Activated CD4-positive, alpha-beta T cell treated with anti-CD3 and anti-CD28 coated beads, Interleukin-2, amount 10 ng/mL, durations not matched to agents 7 days and 5 days (primary cell): ENCODE measurements at regions of chr10 and their contacts with region 1.

Region 1: DNA sequence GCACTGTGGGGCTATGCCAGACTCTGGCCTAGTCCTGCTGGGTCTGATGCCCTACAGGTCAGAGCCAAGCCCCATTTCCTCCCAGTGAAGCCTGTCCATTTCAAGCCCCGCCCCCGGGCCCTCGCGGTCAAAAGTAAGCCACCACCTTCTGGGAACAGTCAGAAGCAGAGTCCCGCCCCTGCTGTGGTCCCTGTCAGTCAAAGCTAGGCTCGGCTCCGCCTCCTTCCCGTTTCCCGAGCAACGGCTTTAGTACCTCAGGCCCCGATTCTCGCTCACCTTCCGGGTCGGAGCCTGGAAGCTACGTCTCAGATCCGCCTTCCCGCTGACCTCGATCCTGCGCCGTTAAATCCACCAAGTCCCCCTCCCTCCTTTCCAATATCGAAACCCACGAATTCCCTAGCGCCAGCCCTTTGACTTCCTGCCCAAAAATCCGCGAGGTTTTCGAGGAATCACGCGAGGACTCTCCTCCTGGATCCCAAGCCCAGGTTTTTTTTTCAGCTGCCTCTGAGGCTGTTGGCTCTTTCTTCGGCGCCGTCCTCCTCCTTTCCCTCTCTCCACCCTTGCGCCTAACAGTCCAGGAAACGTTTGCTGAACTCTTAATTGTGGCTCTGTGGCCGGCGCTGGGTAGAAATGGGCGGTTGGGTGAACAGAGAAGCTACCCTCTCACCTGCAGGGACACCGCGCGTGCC is 11.8 kb downstream of the SFXN3 start:
- DNase-seq: peak; percentile 89
- H3K4me3 Mint-ChIP-seq: peak overlapping the region; percentile 89
- H3K27ac Mint-ChIP-seq: peak overlapping the region; percentile 85
- H3K4me1 Mint-ChIP-seq: peaks cover 33% of the 10 kb centered on the region
- H3K27me3 Mint-ChIP-seq: peaks cover 38% of the 10 kb centered on the region

Region 2: DNA sequence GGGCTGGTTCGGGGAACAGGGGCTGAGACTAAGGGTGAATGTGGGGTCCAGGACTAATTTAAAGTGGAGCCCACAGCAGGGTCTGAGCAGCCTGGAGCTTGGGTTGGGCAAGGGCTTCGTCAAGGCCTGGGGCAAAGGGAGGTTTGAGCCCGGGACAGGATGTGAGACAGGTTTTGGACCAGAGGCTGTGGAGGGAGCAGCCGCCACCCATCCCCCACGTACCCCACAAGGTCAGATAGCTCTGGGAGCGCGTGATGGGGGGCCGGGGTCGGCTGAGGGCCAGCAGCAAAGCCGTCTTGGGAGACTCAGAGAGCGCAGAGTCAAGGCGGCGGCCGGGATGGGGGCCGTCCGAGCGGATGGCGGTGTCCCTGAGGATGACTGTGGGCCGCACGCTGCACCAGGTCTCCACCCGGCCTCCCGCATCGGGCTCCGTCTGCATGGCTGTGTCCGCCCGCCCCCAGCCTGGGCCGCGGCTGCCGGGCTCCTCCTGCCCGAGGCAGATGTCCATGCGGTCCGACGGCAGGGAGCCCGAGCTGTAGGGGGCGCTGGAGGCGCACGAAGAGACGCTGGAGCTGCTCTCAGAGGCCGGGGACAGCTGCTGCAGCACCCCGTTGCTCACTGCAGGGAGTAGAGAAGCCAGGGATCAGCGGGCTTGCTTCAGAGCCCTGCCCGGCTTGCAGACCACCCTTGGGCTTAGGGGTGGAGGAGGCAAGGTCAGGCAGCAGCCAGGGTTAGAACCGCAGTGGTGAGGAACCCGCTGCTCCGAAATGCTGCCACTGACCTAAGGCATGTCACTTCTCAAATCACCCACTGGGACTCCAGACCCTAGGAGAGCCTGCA is 24.0 kb before region 1 on chr10:
- CTCF ChIA-PET with region 1: interaction called, 30 read pairs
- POLR2A ChIA-PET with region 1: no interaction called
- DNase-seq: peak; percentile 76
- H3K4me3 Mint-ChIP-seq: no peak overlapping the region
- H3K27ac Mint-ChIP-seq: no peak overlapping the region
- H3K4me1 Mint-ChIP-seq: peaks cover 11% of the 10 kb centered on the region
- H3K27me3 Mint-ChIP-seq: peaks cover 38% of the 10 kb centered on the region

Region 3: GRCh38 chr10:101060036-101060950 is 17.5 kb after region 1 on chr10:
- CTCF ChIA-PET with region 1: interaction called, 34 read pairs
- POLR2A ChIA-PET with region 1: no interaction called
- DNase-seq: peak; percentile 93
- H3K4me3 Mint-ChIP-seq: peak overlapping the region; percentile 93
- H3K27ac Mint-ChIP-seq: peak overlapping the region; percentile 83
- H3K4me1 Mint-ChIP-seq: peaks cover 52% of the 10 kb centered on the region
- H3K27me3 Mint-ChIP-seq: peaks cover 24% of the 10 kb centered on the region

Region 4: GRCh38 chr10:101067356-101068083 is 24.7 kb after region 1 on chr10:
- CTCF ChIA-PET with region 1: interaction called, 34 read pairs
- POLR2A ChIA-PET with region 1: no interaction called
- DNase-seq: peak; percentile 83
- H3K4me3 Mint-ChIP-seq: peak overlapping the region; percentile 76
- H3K27ac Mint-ChIP-seq: no peak overlapping the region
- H3K4me1 Mint-ChIP-seq: peaks cover 30% of the 10 kb centered on the region
- H3K27me3 Mint-ChIP-seq: peaks cover 49% of the 10 kb centered on the region

Region 5: DNA sequence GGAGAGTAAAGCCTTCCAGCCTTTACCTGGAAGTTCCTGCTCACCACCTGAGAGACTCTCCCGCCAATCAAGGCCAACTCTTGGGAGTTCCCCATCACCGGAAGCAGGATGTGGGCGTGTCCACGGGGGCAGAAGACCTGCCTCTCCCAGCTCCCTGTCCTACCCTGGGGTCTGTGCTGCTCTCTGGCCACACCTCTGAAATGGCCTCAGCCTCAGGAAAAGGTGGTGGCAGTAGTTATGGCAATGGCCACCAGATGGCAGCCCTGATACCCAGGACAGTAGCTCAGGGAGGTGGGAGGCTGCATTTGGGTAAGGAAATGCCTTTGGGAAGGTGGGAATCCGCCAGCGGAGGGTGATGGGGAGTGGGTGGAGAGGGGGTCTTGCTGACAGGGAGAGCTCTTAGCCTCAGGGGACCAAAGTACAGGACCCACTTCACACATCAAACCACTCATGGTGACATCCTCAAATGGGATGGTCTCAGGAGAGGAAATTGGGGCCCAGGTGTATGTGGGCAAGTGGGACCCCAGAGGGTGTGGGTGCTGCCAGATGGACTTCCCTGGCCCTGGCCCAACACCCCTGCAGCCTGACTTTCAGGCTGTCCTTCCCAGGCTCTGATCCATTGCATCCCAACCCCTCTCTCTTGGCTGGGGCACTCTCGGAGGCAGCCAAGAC is 52.9 kb after region 1 on chr10:
- CTCF ChIA-PET with region 1: interaction called, 14 read pairs
- POLR2A ChIA-PET with region 1: no interaction called
- DNase-seq: peak; percentile 75
- H3K4me3 Mint-ChIP-seq: no peak overlapping the region
- H3K27ac Mint-ChIP-seq: no peak overlapping the region
- H3K4me1 Mint-ChIP-seq: no peaks in the 10 kb centered on the region
- H3K27me3 Mint-ChIP-seq: peaks cover 18% of the 10 kb centered on the region

Region 6: DNA sequence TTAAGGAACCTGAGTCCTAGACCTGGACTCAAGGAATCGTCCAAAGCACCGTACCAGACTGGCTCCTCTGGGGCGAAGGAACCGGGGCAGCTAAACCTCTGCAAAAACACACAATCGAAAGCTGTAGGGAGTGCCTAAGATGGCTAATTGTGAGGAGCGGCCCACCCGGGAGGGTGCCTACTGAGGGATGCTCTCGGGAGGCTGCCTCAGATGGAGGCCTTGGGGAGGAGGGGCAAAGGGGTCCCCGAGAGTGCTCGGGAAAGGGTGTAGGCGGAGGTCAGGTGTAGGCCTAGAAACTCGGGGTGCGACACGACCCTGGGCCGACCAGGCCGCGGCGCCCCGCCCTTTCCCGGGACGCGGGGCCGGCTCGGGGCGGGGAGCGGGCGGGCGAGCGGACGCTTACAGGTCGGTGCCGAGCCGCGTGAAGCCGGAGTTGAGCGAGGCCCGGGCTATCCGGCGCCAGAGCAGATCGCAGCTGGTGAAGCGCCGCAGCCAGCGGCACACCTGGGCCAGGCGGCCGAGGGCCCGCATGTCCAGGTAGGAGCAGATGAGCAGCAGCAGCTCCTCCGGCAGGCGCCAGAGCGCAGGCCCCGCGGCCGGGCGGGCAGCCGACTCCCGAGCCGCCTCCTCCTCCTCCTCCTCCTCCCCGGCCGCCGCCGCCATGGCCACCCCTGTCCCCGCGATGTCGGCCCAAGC is 651.3 kb after region 1 on chr10:
- CTCF ChIA-PET with region 1: no interaction called
- POLR2A ChIA-PET with region 1: no interaction called
- DNase-seq: peak; percentile 64
- H3K4me3 Mint-ChIP-seq: peak overlapping the region; percentile 97
- H3K27ac Mint-ChIP-seq: peak overlapping the region; percentile 99
- H3K4me1 Mint-ChIP-seq: peaks cover 32% of the 10 kb centered on the region
- H3K27me3 Mint-ChIP-seq: no peaks in the 10 kb centered on the region